Activated T-helper 1 cell treated with anti-CD3 and anti-CD28 coated beads, Interleukin-12 subunit alpha, Interleukin-12 subunit beta, Interleukin-2, Interleukin-4 antibody, amounts not matched to agents 30 ng/mL and 10 ng/mL and 1 ng/mL, durations not matched to agents 14 hours and 24 hours and 36 hours (primary cell): ENCODE measurements at regions of chr6 and their contacts with region 1.

Region 1: GRCh38 chr6:155188707-155189496 is 74.9 kb upstream of the CLDN20 start:
- DNase-seq: no peak
- H3K4me3 Mint-ChIP-seq: peak overlapping the region; percentile 52
- H3K27ac Mint-ChIP-seq: peak overlapping the region; percentile 86
- H3K4me1 Mint-ChIP-seq: peaks cover 51% of the 10 kb centered on the region
- H3K27me3 Mint-ChIP-seq: no peaks in the 10 kb centered on the region

Region 2: GRCh38 chr6:154606457-154606856 is 582.4 kb before region 1 on chr6:
- intact Hi-C with region 1: loop called (anchors 1 kb)
- DNase-seq: peak; percentile 66
- H3K4me3 Mint-ChIP-seq: peak overlapping the region; percentile 65
- H3K27ac Mint-ChIP-seq: peak overlapping the region; percentile 86
- H3K4me1 Mint-ChIP-seq: peaks cover 24% of the 10 kb centered on the region
- H3K27me3 Mint-ChIP-seq: peaks cover 3% of the 10 kb centered on the region

Region 3: DNA sequence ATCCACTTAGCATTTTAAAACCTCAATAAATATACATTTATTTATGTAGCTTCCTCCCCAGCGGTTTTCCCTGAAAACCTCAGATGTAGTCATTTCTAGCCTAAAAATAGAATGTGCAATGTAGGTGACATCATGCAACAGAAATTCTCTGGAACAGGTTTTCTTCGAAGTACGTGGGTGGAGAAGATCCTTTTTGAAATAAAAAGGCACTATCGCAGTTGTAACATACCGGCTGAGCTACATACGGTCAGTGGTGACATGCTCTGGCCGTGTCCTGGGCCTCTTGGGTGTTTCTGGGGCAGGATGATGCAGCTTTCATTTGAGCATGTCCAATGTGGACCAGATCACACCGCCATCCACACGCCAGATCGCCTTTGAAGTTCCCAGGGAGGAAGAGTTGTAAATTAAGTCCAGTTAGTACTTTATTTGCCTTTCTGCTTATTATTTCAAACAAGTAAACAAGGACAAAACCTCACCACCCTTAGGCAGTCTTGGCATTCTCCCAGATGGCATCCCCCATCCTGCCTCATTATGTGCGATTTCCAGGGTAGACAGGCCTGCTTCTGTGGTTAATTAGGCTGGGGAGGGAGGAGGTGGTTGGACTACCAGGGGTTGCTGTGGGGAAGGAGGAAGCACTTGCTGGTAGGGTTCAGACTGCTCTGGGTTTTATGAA is 34.6 kb before region 1 on chr6:
- intact Hi-C with region 1: loop called (anchors 1 kb)
- DNase-seq: peak; percentile 48
- H3K4me3 Mint-ChIP-seq: peak overlapping the region; percentile 78
- H3K27ac Mint-ChIP-seq: peak overlapping the region; percentile 97
- H3K4me1 Mint-ChIP-seq: peaks cover 90% of the 10 kb centered on the region
- H3K27me3 Mint-ChIP-seq: peaks cover 2% of the 10 kb centered on the region

Region 4: GRCh38 chr6:155223646-155224451 is 34.9 kb after region 1 on chr6:
- intact Hi-C with region 1: loop called (anchors 1 kb)
- DNase-seq: peak; percentile 65
- H3K4me3 Mint-ChIP-seq: peak overlapping the region; percentile 70
- H3K27ac Mint-ChIP-seq: peak overlapping the region; percentile 91
- H3K4me1 Mint-ChIP-seq: peaks cover 34% of the 10 kb centered on the region
- H3K27me3 Mint-ChIP-seq: peaks cover 2% of the 10 kb centered on the region

Region 5: DNA sequence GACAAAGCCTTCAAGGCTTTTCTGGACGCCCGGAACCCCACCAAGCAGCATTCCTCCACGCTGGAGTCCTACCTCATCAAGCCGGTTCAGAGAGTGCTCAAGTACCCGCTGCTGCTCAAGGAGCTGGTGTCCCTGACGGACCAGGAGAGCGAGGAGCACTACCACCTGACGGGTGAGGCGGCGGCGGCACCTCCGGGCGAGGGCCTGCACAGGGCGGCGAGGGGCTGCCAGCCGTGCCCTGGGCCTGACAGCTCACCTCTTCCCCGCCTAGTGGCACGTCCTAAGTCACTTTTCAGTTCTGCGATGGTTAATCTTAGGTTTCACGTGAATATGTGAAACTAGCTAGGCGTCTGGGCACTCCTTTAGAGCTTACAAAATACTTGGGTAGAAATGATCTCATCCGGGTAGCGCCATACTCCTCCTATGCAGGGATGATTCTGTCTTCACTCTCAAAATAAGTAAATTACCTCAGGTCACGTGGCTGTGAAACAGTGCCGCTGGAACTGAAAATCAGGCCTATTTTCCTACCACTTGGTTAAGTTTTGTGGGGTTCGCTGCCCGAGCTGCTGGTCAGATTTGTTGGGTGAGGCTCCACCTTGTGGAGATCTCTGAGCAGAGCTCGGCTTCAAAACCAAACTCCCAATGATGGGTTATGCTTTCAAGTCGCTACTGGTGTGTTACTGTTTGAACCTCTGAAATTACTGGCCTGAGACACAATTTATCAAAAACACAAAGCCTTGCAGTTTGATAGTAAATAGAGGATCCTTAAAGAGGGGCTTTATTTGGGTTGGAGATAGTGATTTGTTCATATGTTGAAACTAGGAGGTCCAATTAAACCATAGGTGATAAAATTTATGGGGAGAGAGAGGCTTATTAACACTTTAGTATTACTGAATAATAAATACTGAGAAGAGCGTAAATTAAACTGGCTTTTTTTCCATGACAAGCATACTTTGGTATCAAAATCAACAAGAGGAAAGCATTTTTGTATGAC is 59.4 kb after region 1 on chr6:
- intact Hi-C with region 1: loop called (anchors 2 kb)
- DNase-seq: no peak
- H3K4me3 Mint-ChIP-seq: no peak overlapping the region
- H3K27ac Mint-ChIP-seq: no peak overlapping the region
- H3K4me1 Mint-ChIP-seq: peaks cover 6% of the 10 kb centered on the region
- H3K27me3 Mint-ChIP-seq: no peaks in the 10 kb centered on the region

Region 6: GRCh38 chr6:155264693-155265320 is 75.9 kb after region 1 on chr6:
- intact Hi-C with region 1: no loop called
- DNase-seq: no peak
- H3K4me3 Mint-ChIP-seq: no peak overlapping the region
- H3K27ac Mint-ChIP-seq: no peak overlapping the region
- H3K4me1 Mint-ChIP-seq: peaks cover 6% of the 10 kb centered on the region
- H3K27me3 Mint-ChIP-seq: no peaks in the 10 kb centered on the region

Region 7: GRCh38 chr6:155530219-155530834 is 341.4 kb after region 1 on chr6:
- intact Hi-C with region 1: loop called (anchors 2 kb)
- DNase-seq: no peak
- H3K4me3 Mint-ChIP-seq: no peak overlapping the region
- H3K27ac Mint-ChIP-seq: no peak overlapping the region
- H3K4me1 Mint-ChIP-seq: peaks cover 10% of the 10 kb centered on the region
- H3K27me3 Mint-ChIP-seq: peaks cover 4% of the 10 kb centered on the region